ENCODE measurements at regions of chr11 and their contacts with region 1.

Region 1: GRCh38 chr11:73335204-73335923 is 27.3 kb downstream of the ARHGEF17 start:
- DNase-seq: peak; percentile 83
- H3K4me3 ChIP-seq: peak overlapping the region; percentile 1 to 7; a peak in 2 of 4 replicates
- H3K27ac ChIP-seq: peak overlapping the region; percentile 97 to 98
- H3K4me1 ChIP-seq: peaks cover 48 to 58% of the 10 kb centered on the region in 2 experiments
- H3K27me3 ChIP-seq: no peaks in the 10 kb centered on the region
- CTCF ChIP-seq: peak; percentile 99
- EP300 ChIP-seq: no peak; a peak in 1 of 4 replicates
- RAD21 ChIP-seq: peak; percentile 98

Region 2: GRCh38 chr11:73242251-73243079 is 92.9 kb before region 1 on chr11:
- CTCF ChIA-PET with region 1: interaction called, 11 read pairs
- POLR2A ChIA-PET with region 1: no interaction called
- DNase-seq: peak; percentile 88
- H3K4me3 ChIP-seq: peak overlapping the region; percentile 20 to 35; a peak in 3 of 4 replicates
- H3K27ac ChIP-seq: peak overlapping the region; percentile 8 to 64; a peak in 2 of 4 replicates
- H3K4me1 ChIP-seq: peaks cover 0 to 27% of the 10 kb centered on the region in 2 experiments; a peak in 2 of 4 replicates
- H3K27me3 ChIP-seq: no peaks in the 10 kb centered on the region
- CTCF ChIP-seq: peak; percentile 95
- EP300 ChIP-seq: no peak
- RAD21 ChIP-seq: peak; percentile 78

Region 3: DNA sequence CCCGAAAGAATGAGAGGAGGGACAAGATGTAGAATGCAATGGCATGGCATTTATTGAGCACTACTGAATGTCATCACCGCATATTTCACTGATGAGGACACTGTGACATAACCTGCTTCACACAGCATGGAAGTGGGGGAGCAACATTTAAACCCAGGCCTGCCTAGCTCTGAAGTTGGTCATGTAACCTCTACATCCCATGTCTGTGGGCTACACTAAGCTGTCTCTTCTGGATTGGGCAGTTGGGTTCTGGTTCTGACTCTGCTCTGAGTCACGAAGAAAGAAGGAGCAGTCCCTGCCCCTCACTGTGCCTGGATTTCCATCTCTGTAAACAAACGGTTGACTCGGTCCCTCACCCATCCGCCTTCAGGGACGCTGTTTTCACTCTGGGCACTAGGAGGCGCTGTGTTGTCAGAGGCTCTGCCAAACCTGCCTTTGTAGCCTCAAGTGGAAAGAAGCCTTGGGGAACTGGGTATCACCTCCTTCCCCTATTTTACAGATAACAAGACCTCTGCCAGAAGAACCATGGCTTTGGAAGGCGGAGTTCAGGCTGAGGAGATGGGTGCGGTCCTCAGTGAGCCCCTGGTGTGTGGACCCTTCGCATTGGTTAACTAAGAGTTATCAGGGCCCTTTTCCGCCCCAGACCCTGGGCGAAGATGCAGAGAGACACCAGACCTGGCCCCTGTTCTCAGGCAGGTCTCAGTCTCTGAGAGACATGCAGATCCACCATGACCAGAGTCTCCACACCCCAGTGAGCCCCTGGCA is 40.0 kb before region 1 on chr11:
- CTCF ChIA-PET with region 1: interaction called, 132 read pairs
- POLR2A ChIA-PET with region 1: no interaction called
- DNase-seq: peak; percentile 77
- H3K4me3 ChIP-seq: peak overlapping the region in 1 of 2 experiments; percentile 35; a peak in 1 of 4 replicates
- H3K27ac ChIP-seq: peak overlapping the region in 1 of 2 experiments; percentile 25; a peak in 2 of 4 replicates
- H3K4me1 ChIP-seq: peaks cover 0 to 4% of the 10 kb centered on the region in 2 experiments; a peak in 1 of 4 replicates
- H3K27me3 ChIP-seq: no peaks in the 10 kb centered on the region
- CTCF ChIP-seq: peak; percentile 97
- EP300 ChIP-seq: no peak
- RAD21 ChIP-seq: peak; percentile 64

Region 4: GRCh38 chr11:73325036-73325981 is 10.1 kb before region 1 on chr11:
- CTCF ChIA-PET with region 1: interaction called, 395 read pairs
- POLR2A ChIA-PET with region 1: no interaction called
- DNase-seq: peak; percentile 84
- H3K4me3 ChIP-seq: no peak overlapping the region; a peak in 1 of 4 replicates
- H3K27ac ChIP-seq: peak overlapping the region; percentile 92 to 98
- H3K4me1 ChIP-seq: peaks cover 77 to 81% of the 10 kb centered on the region in 2 experiments
- H3K27me3 ChIP-seq: no peaks in the 10 kb centered on the region
- CTCF ChIP-seq: no peak
- EP300 ChIP-seq: peak in 1 of 2 experiments; percentile 62; a peak in 1 of 4 replicates
- RAD21 ChIP-seq: no peak

Region 5: GRCh38 chr11:73360336-73361013 is 25.1 kb after region 1 on chr11:
- CTCF ChIA-PET with region 1: interaction called, 11 read pairs
- POLR2A ChIA-PET with region 1: no interaction called
- DNase-seq: peak; percentile 78
- H3K4me3 ChIP-seq: no peak overlapping the region; a peak in 1 of 4 replicates
- H3K27ac ChIP-seq: no peak overlapping the region
- H3K4me1 ChIP-seq: peaks cover 0 to 8% of the 10 kb centered on the region in 2 experiments; a peak in 1 of 4 replicates
- H3K27me3 ChIP-seq: no peaks in the 10 kb centered on the region
- CTCF ChIP-seq: peak; percentile 54
- EP300 ChIP-seq: no peak
- RAD21 ChIP-seq: peak; percentile 57

Region 6: DNA sequence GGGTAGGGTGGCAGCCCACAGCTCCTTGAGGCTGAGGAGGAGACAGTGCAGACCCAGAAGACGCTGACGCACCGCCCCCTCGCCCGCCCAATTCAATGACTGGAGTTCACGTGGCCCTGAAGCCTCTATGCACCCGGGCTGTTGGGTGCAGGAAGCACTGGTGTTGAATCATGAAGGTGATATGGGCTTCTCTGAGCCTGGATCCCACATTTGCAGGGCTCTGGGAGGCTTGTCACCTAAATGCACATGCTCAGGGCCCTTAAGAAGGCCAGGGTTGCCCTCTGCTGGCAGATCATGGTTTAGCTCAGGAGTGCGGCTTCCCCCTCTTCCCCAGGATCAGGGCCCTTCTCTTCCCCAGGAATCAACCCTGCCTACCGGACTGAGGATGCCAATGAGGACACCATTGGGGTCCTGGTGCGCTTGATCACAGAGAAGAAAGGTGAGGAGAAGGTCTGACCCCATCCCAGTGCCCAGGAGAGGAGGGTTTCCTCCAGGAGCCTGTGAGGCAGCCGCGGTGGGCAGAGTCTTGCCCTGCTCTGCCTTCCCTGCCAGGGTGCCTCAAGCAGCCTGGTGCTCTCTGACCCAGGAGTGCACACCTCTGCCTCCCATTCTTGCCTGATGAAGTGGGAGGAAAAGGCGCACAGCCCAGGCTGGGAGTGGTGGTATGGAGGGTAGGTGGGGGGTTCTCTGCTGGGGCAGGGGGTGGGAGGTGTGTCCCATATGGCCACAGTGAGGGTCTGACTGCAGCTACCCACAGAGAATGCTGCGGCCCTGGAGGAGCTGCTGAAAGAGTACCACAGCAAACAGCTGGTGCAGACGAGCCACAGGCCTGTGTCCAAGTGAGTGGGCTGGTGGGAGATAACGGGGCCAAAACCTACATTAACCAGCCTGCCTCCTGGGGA is 58.4 kb after region 1 on chr11:
- CTCF ChIA-PET with region 1: interaction called, 29 read pairs
- POLR2A ChIA-PET with region 1: interaction called, 3 read pairs
- DNase-seq: peak; percentile 94
- H3K4me3 ChIP-seq: no peak overlapping the region; a peak in 1 of 4 replicates
- H3K27ac ChIP-seq: no peak overlapping the region
- H3K4me1 ChIP-seq: no peaks in the 10 kb centered on the region; a peak in 1 of 4 replicates
- H3K27me3 ChIP-seq: no peaks in the 10 kb centered on the region
- CTCF ChIP-seq: peak; percentile 81
- EP300 ChIP-seq: no peak
- RAD21 ChIP-seq: peak; percentile 92

Region 7: GRCh38 chr11:73810637-73811036 is 475.3 kb after region 1 on chr11:
- CTCF ChIA-PET with region 1: no interaction called
- POLR2A ChIA-PET with region 1: no interaction called
- DNase-seq: no peak
- H3K4me3 ChIP-seq: no peak overlapping the region
- H3K27ac ChIP-seq: no peak overlapping the region
- H3K4me1 ChIP-seq: no peaks in the 10 kb centered on the region
- H3K27me3 ChIP-seq: no peaks in the 10 kb centered on the region
- CTCF ChIP-seq: no peak
- EP300 ChIP-seq: no peak
- RAD21 ChIP-seq: no peak